HepG2 (cell line): ENCODE measurements at regions of chr9 and their contacts with region 1.

Region 1: DNA sequence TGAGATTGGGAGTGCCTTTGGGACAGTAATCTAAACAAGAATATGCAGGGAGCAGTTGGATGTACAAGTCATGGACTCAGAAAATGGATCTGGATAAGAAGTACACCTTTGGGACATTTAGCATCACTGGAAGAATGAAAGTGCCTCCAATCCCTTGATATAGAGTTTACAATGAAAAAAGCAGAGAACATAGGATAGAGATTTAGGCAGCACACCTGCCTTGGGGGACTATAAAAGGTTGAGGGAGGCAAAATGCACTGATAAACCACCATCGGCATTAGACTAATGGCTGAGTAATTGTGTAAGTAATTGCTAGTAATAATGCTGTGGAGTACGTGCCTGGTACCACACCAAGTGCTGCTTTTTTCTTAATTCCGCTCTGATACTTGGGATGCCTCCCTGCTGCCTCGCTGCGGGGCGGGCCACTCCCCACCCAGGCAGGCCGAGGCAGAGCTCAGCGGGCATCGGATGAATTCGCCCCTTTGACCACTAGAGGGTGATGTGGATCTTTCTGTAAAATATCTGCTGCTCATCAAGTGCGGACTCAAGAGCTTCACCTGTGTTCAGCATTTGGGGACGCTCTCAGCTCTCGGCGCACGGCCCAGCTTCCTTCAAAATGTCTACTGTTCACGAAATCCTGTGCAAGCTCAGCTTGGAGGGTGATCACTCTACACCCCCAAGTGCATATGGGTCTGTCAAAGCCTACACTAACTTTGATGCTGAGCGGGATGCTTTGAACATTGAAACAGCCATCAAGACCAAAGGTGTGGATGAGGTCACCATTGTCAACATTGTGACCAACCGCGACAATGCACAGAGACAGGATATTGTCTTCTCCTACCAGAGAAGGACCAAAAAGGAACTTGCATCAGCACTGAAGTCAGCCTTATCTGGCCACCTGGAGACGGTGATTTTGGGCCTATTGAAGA is 99.9 kb downstream of the ANKRD18B start:
- DNase-seq: peak; percentile 63
- ATAC-seq: peak; percentile 98
- H3K4me3 ChIP-seq: no peak overlapping the region
- H3K27ac ChIP-seq: no peak overlapping the region
- H3K4me1 ChIP-seq: no peaks in the 10 kb centered on the region
- H3K27me3 ChIP-seq: 0 out of 5 replicates have a peak, but pooled peaks cover 0 to 1% of the 10 kb centered on the region in 2 experiments
- CTCF ChIP-seq: peak; percentile 94
- EP300 ChIP-seq: no peak
- POLR2A ChIP-seq: no peak
- RAD21 ChIP-seq: peak; percentile 76

Region 2: GRCh38 chr9:33721674-33722358 is 97.9 kb after region 1 on chr9:
- CTCF ChIA-PET with region 1: interaction called, 163 read pairs
- POLR2A ChIA-PET with region 1: no interaction called
- in situ Hi-C with region 1: loop called (anchors 10 kb)
- intact Hi-C with region 1: loop called (anchors 1 kb)
- DNase-seq: peak; percentile 67
- ATAC-seq: peak; percentile 83
- H3K4me3 ChIP-seq: peak overlapping the region in 1 of 3 experiments; percentile 59; a peak in 2 of 6 replicates
- H3K27ac ChIP-seq: no peak overlapping the region
- H3K4me1 ChIP-seq: peaks cover 14% of the 10 kb centered on the region
- H3K27me3 ChIP-seq: peaks cover 0 to 6% of the 10 kb centered on the region in 2 experiments; a peak in 3 of 5 replicates
- CTCF ChIP-seq: peak; percentile 100
- EP300 ChIP-seq: no peak
- POLR2A ChIP-seq: no peak
- RAD21 ChIP-seq: peak; percentile 99